HEK293T (cell line): ENCODE measurements at regions of chr5 and their contacts with region 1.

Region 1: DNA sequence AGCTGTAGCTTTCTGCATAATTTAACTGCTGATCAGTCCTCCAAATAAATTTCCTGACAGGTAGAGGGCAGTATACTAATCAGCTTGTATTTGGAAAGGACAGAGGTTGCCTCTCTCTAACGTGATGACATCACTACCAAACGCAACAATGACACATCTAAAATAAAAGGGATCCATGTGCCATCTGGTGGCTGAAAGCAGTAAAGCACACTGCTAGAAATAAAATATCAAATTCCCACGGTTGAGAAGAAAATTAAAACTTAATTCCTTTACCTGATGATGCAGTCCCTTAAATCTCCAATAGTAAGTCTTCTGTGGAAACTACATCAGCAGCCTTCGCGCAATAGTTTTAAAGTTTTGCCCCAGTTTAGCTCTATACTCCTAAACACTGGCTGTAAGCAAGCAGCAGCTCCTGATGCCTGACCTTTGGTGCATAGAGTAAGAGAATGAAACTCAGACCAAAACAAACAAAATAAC is 54.5 kb downstream of the DIAPH1 start:
- DNase-seq: peak; percentile 69

Region 2: GRCh38 chr5:140725799-140726471 is 838.3 kb before region 1 on chr5:
- CTCF ChIA-PET with region 1: no interaction called
- POLR2A ChIA-PET with region 1: no interaction called
- DNase-seq: peak; percentile 69

Region 3: DNA sequence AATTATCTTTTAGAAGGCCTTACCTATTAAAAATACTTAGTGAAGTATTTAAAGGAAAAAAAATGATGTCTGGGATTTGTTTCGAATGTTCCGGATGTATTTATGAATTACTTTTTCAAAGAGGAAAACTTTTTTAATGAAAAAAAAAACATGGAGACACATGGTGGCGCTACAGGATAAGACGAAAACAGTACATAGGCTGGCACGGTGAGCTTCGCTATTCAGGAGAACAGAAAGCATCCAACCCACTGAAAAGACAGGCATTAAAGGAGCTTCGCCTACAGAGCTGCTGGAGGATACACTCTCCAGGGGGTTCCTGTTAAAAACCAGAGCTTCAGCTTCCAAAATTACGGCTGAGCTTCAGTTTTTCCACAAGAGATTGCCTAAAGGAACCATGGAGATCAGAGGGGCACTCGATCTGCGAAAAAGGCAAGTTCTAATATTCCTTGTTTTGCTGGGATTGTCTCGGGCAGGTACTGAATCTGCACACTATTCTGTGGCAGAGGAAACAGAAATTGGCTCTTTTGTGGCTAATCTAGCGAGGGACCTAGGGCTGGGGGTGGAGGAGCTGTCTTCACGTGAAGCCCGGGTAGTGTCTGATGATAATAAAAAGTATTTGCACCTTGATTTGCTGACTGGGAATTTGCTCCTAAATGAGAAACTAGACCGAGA is 341.0 kb before region 1 on chr5 and contains the start of gene PCDHB14:
- CTCF ChIA-PET with region 1: interaction called, 23 read pairs
- POLR2A ChIA-PET with region 1: interaction called, 3 read pairs
- DNase-seq: peak; percentile 46

Region 4: DNA sequence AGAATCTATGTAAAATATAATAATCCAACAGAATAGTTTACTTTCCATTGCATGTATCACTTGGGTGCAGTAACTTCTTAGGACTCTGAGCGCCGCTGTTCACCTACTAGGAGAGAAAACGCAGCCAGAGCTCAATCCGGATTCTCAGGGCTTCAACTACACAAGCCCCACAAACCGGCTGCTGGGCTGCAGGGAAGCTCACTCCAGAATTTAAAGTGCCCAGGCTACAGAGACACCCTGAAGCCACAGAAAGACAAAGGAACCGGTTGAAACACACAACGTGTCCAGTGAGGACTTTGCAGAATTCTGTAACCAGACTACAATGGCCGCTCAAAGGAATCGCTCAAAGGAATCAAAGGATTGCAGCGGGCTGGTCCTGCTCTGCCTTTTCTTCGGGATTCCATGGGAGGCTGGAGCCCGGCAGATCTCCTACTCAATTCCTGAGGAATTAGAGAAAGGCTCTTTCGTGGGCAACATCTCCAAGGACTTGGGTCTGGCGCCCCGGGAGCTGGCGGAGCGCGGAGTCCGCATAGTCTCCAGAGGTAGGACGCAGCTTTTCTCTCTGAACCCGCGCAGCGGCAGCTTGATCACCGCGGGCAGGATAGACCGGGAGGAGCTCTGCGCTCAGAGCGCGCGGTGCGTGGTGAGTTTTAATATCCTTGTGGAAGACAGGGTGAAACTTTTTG is 151.3 kb before region 1 on chr5 and contains the start of gene PCDHGA10:
- CTCF ChIA-PET with region 1: interaction called, 11 read pairs
- POLR2A ChIA-PET with region 1: no interaction called
- DNase-seq: peak; percentile 45

Region 5: GRCh38 chr5:141492168-141492885 is 71.9 kb before region 1 on chr5:
- CTCF ChIA-PET with region 1: no interaction called
- POLR2A ChIA-PET with region 1: no interaction called
- DNase-seq: no peak